IMR-90 (cell line): ENCODE measurements at regions of chr1 and their contacts with region 1.

Region 1: DNA sequence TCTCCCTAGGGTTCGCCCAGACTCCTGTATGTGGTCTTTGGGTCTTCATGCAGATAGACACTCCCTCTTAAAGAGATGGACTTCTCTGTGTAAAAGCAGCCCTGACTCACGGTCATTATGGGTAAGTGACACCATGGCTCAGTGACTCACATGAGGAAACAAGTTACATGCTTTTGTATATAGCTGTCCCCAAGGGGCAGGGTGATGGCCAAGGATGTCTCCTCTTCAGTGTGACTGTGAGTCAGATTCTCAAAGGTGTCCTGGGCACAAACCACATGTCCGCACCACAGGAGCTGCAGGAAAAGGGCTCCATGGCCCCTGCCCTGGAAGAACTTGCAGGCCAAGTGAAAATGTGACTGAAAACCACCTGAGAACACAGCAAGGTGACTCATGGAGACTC is 380.4 kb downstream of the NPHP4 start:
- DNase-seq: no peak
- ATAC-seq: no peak
- H3K4me3 ChIP-seq: no peak overlapping the region
- H3K27ac ChIP-seq: no peak overlapping the region
- H3K4me1 ChIP-seq: no peaks in the 10 kb centered on the region
- H3K27me3 ChIP-seq: no peaks in the 10 kb centered on the region
- CTCF ChIP-seq: no peak
- POLR2A ChIP-seq: no peak
- RAD21 ChIP-seq: no peak

Region 2: GRCh38 chr1:5554784-5555183 is 57.1 kb before region 1 on chr1:
- CTCF ChIA-PET with region 1: no interaction called
- POLR2A ChIA-PET with region 1: no interaction called
- dilution Hi-C with region 1: no loop called
- in situ Hi-C with region 1: no loop called
- intact Hi-C with region 1: loop called (anchors 5 kb)
- DNase-seq: no peak
- ATAC-seq: no peak
- H3K4me3 ChIP-seq: no peak overlapping the region
- H3K27ac ChIP-seq: no peak overlapping the region
- H3K4me1 ChIP-seq: no peaks in the 10 kb centered on the region
- H3K27me3 ChIP-seq: no peaks in the 10 kb centered on the region
- CTCF ChIP-seq: no peak
- POLR2A ChIP-seq: no peak
- RAD21 ChIP-seq: no peak

Region 3: DNA sequence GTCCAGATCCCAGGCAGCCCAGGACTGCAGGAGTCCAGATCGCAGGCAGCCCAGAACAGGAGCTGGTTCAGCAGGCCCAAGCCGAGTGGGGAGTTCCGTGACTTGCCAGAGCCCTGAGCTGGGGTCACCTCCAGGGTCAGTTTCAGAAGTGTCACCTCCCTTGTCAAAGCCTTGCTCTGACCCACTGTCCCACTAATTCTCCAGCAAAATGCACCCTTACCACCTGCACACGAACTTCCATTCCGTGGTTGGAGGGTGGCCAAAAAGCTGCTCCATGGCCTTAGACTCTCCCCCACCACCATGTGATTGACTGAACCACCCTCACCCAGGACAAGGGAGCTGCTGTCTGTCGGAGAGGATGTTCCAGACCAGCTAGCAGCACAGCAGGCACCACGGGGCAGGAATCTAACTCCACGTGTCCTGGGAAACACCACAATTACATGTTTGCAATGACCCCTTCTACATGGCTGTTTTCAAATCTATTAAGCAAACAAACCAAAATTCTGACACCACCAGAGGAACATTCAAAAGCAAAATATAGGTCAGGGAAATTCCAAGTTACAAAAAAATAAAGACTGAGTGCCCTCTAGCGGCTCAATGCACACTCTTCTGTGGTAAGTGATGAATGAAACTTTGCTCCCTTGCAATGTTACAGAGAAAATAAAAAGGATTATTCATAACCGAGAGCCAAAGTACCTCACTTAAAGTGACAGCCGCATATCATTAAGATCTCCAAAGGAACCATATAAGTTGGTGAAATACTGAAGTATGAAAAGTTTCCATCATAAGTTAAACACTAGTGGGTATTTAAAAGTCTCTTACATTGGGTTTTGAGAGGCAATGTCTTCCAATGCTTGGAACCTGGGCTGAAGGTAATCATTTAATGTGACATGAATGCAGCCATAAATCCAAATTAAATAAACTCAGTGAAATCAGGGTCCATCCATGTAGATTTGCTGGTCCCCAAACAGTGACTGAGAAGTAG is 304.0 kb after region 1 on chr1:
- CTCF ChIA-PET with region 1: no interaction called
- POLR2A ChIA-PET with region 1: no interaction called
- dilution Hi-C with region 1: no loop called
- in situ Hi-C with region 1: no loop called
- intact Hi-C with region 1: no loop called
- DNase-seq: peak; percentile 65
- ATAC-seq: peak; percentile 84
- H3K4me3 ChIP-seq: no peak overlapping the region
- H3K27ac ChIP-seq: no peak overlapping the region
- H3K4me1 ChIP-seq: peaks cover 5% of the 10 kb centered on the region
- H3K27me3 ChIP-seq: no peaks in the 10 kb centered on the region
- CTCF ChIP-seq: peak; percentile 84
- POLR2A ChIP-seq: no peak
- RAD21 ChIP-seq: peak; percentile 73

Region 4: DNA sequence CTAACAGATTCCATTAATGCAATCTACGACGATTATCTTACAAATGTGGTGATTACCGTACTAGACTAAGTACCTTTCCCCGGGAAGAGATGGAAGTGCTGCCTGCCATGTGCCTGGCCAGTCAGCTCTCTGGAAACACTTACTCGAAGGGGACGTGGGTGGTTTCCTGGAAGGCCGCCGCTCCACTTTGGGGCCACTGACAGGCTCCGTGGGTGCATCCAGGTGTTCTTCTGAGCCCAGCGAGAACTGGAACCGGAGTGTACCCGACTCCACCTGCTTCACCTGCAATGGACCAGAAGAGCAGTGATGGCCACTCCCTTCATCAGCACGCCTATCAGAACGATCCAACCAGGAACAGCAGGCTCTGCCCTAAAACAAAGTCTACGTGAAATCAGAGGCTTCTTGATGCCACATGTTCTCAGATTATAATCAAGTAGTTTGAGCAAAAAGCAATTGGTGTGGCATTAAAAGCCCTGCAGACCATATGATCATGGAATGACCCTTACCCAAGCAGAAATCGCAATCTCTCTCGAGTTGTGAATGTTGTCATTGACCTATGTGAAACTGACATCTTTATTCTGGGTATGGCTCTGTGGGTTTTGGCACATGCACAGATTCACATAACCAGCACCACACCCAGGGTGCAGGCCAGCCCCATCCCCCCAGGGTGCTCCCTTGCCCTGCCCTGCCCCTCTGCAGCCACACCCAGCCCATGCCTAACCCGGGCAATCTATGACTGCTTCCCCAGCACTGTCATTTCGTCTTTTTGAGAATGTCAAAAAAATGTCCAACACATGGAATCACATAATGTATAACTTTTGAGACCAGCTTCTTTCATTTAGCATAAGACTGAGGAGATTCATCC is 315.9 kb after region 1 on chr1:
- CTCF ChIA-PET with region 1: no interaction called
- POLR2A ChIA-PET with region 1: no interaction called
- dilution Hi-C with region 1: no loop called
- in situ Hi-C with region 1: no loop called
- intact Hi-C with region 1: no loop called
- DNase-seq: no peak
- ATAC-seq: no peak
- H3K4me3 ChIP-seq: no peak overlapping the region
- H3K27ac ChIP-seq: no peak overlapping the region
- H3K4me1 ChIP-seq: no peaks in the 10 kb centered on the region
- H3K27me3 ChIP-seq: no peaks in the 10 kb centered on the region
- CTCF ChIP-seq: no peak
- POLR2A ChIP-seq: no peak
- RAD21 ChIP-seq: no peak

Region 5: DNA sequence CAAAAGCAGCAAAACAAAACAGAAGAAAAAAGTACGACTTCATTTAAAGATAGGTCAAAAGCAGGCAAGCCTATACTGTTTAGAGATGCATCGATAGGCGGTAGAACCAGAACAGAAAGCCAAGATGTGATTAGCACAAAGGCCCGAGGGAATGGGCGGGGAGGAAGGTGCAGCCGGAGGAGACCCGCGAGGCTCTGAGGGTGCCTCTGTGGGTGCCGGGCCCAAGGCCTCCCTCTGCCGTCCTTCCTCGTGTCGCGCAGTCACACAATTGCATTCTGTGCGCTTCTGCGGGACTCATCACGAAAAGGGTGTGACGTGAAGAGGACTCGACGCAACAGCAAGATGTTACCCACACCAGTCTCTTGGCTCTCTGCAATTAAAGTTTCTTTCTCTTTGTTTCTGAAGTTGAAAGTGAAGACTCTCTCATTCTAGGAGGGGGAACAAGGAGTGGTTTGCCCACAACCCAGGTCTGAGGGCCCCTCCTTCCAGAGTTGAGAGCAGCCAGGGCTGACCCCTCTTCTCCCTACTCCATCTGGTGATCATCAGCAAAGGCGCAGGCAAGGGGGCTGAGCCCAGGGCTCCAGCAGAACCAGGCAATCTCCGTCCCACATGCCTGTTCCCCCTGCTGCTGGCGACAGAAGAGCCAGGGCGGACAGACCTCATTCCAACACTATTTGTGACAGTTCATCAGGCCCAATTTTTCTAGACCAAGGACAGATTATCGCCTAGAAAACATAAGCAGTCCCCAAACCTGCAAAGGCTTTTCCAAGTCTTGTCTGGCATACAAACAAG is 339.3 kb after region 1 on chr1:
- CTCF ChIA-PET with region 1: no interaction called
- POLR2A ChIA-PET with region 1: no interaction called
- dilution Hi-C with region 1: no loop called
- in situ Hi-C with region 1: no loop called
- intact Hi-C with region 1: no loop called
- DNase-seq: no peak
- ATAC-seq: no peak
- H3K4me3 ChIP-seq: no peak overlapping the region
- H3K27ac ChIP-seq: no peak overlapping the region
- H3K4me1 ChIP-seq: no peaks in the 10 kb centered on the region
- H3K27me3 ChIP-seq: no peaks in the 10 kb centered on the region
- CTCF ChIP-seq: no peak
- POLR2A ChIP-seq: no peak
- RAD21 ChIP-seq: no peak